ENCODE measurements at regions of chr11 and their contacts with region 1.

Region 1: GRCh38 chr11:71568435-71569349 is 3.3 kb downstream of the KRTAP5-10 start:
- DNase-seq: no peak
- H3K4me3 ChIP-seq: no peak overlapping the region
- H3K27ac ChIP-seq: no peak overlapping the region
- H3K4me1 ChIP-seq: peaks cover 0 to 3% (median 0%) of the 10 kb centered on the region in 4 donors
- H3K27me3 ChIP-seq: peaks cover 9% of the 10 kb centered on the region
- CTCF ChIP-seq: no peak
- EP300 ChIP-seq: no peak
- POLR2A ChIP-seq: no peak

Region 2: GRCh38 chr11:72705442-72706365 is 1137.0 kb after region 1 on chr11:
- in situ Hi-C with region 1: no loop called
- intact Hi-C with region 1: loop called (anchors 5 kb)
- DNase-seq: no peak
- H3K4me3 ChIP-seq: no peak overlapping the region
- H3K27ac ChIP-seq: no peak overlapping the region
- H3K4me1 ChIP-seq: peaks cover 0 to 9% (median 3%) of the 10 kb centered on the region in 4 donors
- H3K27me3 ChIP-seq: no peaks in the 10 kb centered on the region
- CTCF ChIP-seq: no peak
- EP300 ChIP-seq: no peak
- POLR2A ChIP-seq: no peak

Measured in transverse colon (tissue), 4 donors.